ENCODE measurements at regions of chr9 and their contacts with region 1.

Region 1: DNA sequence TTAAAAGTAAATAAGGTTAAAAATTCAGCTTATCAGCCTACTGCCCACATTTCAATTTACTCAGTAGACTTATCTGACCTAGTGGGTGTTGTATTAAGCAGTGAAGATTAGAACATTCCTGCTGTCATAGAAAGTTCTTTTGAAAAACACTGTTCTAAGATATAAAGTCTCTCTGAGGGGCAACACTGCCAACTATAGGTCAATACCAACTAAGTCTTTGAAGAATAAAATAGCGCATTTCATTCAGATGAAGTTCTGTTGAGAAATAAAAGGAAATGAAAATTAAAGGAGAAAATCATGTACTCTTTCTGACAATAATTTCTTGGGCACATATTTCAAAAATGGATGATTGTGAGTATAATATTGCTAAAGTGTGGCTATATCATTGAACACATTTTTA is 86.8 kb downstream of the PTPRD start:
- DNase-seq: no peak
- ATAC-seq: no peak
- H3K4me3 ChIP-seq: no peak overlapping the region
- H3K4me3 Mint-ChIP-seq: no peak overlapping the region
- H3K27ac ChIP-seq: no peak overlapping the region
- H3K27ac Mint-ChIP-seq: no peak overlapping the region
- H3K4me1 ChIP-seq: no peaks in the 10 kb centered on the region
- H3K4me1 Mint-ChIP-seq: no peaks in the 10 kb centered on the region
- H3K27me3 ChIP-seq: no peaks in the 10 kb centered on the region
- H3K27me3 Mint-ChIP-seq: no peaks in the 10 kb centered on the region

Region 2: GRCh38 chr9:10512144-10512543 is 13.8 kb before region 1 on chr9:
- CTCF ChIA-PET with region 1: no interaction called
- POLR2A ChIA-PET with region 1: no interaction called
- intact Hi-C with region 1: no loop called
- DNase-seq: no peak
- ATAC-seq: no peak
- H3K4me3 ChIP-seq: no peak overlapping the region
- H3K4me3 Mint-ChIP-seq: no peak overlapping the region
- H3K27ac ChIP-seq: no peak overlapping the region
- H3K27ac Mint-ChIP-seq: no peak overlapping the region
- H3K4me1 ChIP-seq: no peaks in the 10 kb centered on the region
- H3K4me1 Mint-ChIP-seq: no peaks in the 10 kb centered on the region
- H3K27me3 ChIP-seq: no peaks in the 10 kb centered on the region
- H3K27me3 Mint-ChIP-seq: no peaks in the 10 kb centered on the region

Region 3: DNA sequence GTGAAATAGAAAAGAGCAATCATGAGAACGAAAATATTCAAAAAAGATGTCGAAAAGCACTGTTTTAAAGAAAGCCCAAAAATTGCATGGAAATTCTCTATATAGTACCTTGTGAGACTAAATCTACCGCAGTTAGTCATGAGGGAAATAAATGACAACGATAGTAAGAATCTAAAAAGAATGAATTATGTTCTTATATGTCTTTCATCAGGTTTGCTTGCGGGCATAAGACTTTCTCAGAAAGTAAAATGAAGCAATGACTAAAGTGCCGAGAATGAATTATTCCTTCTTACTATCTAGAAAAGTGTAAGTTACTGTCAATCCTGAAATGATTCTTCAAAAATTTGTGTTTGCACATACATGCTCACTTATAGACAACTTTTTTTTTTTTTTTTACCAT is 60.4 kb after region 1 on chr9:
- CTCF ChIA-PET with region 1: no interaction called
- POLR2A ChIA-PET with region 1: no interaction called
- intact Hi-C with region 1: loop called in 1 of 2 experiments (anchors 10 kb)
- DNase-seq: no peak
- ATAC-seq: no peak
- H3K4me3 ChIP-seq: no peak overlapping the region
- H3K4me3 Mint-ChIP-seq: no peak overlapping the region
- H3K27ac ChIP-seq: no peak overlapping the region
- H3K27ac Mint-ChIP-seq: no peak overlapping the region
- H3K4me1 ChIP-seq: no peaks in the 10 kb centered on the region
- H3K4me1 Mint-ChIP-seq: no peaks in the 10 kb centered on the region
- H3K27me3 ChIP-seq: no peaks in the 10 kb centered on the region
- H3K27me3 Mint-ChIP-seq: no peaks in the 10 kb centered on the region

Measured in naive thymus-derived CD4-positive, alpha-beta T cell (primary cell).